PC-9 (cell line): ENCODE measurements at regions of chr2 and their contacts with region 1.

Region 1: GRCh38 chr2:119011162-119011909 is 69.3 kb downstream of the MARCO start:
- DNase-seq: peak in 1 of 2 experiments; percentile 51
- H3K4me3 ChIP-seq: peak overlapping the region; percentile 13; the same call in 1 of the 2 replicates
- H3K27ac ChIP-seq: no peak overlapping the region
- H3K4me1 ChIP-seq: no peaks in the 10 kb centered on the region
- H3K27me3 ChIP-seq: no peaks in the 10 kb centered on the region
- CTCF ChIP-seq: peak; percentile 79

Region 2: GRCh38 chr2:119476301-119477021 is 465.1 kb after region 1 on chr2:
- CTCF ChIA-PET with region 1: no interaction called
- POLR2A ChIA-PET with region 1: no interaction called
- intact Hi-C with region 1: loop called (anchors 2 kb)
- DNase-seq: peak; percentile 49 to 61
- H3K4me3 ChIP-seq: no peak overlapping the region
- H3K27ac ChIP-seq: no peak overlapping the region
- H3K4me1 ChIP-seq: no peaks in the 10 kb centered on the region
- H3K27me3 ChIP-seq: no peaks in the 10 kb centered on the region
- CTCF ChIP-seq: peak; percentile 100

Region 3: GRCh38 chr2:119659601-119660342 is 648.4 kb after region 1 on chr2:
- CTCF ChIA-PET with region 1: no interaction called
- POLR2A ChIA-PET with region 1: no interaction called
- intact Hi-C with region 1: loop called (anchors 10 kb)
- DNase-seq: peak in 1 of 2 experiments; percentile 40
- H3K4me3 ChIP-seq: no peak overlapping the region
- H3K27ac ChIP-seq: no peak overlapping the region
- H3K4me1 ChIP-seq: no peaks in the 10 kb centered on the region
- H3K27me3 ChIP-seq: 0 out of 2 replicates have a peak, but pooled peaks cover 3% of the 10 kb centered on the region
- CTCF ChIP-seq: peak; percentile 96